ENCODE measurements at regions of chr2 and their contacts with region 1.

Region 1: DNA sequence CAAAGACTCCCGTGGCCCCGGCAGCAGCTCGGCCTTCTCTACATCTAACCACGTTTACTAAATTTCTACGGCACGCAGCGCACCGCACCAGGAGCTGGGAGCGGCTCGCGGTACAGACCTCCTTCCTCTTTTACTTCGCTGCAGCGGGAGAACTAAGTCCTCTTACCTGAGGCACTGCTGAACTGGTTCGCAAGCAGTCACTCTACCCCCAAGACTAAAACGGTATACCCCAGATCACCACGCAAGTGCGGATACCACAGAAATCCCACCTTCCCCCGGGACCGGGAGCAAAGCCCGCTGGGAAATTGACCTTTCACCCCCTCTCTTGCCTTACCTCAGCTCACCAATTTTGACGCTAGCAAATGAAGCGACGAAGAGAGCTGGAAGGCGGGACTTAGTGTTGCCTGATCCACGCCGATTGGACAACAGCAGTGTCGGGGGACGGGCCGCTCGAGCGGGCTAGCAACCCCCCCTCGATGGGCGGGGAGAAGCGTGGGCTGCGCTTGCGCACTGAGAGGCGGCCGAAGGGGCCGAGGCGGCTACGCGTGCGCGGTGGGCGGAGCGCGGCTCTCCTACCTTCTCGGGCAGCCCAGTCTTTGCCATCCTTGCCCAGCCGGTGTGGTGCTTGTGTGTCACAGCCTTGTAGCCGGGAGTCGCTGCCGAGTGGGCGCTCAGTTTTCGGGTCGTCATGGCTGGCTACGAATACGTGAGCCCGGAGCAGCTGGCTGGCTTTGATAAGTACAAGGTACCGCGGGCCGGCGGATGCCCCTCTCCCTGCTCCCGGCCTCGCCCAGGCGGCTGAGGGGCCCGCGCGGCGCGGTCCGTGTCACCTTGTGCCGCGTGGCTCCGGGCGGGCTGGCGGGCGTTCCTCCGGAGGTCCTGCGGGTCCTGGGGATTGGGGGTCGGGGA is at the start of gene SELENOI:
- DNase-seq: peak; percentile 100
- H3K4me3 Mint-ChIP-seq: peak within 1 kb of the TSS; percentile 99
- H3K27ac Mint-ChIP-seq: peak within 1 kb of the TSS; percentile 98
- H3K4me1 Mint-ChIP-seq: peaks cover 33% of the 10 kb centered on the region
- H3K27me3 Mint-ChIP-seq: no peaks in the 10 kb centered on the region
- total RNA-seq, gene SELENOI: 66.6 and 68.2 TPM in 2 replicates

Region 2: GRCh38 chr2:24771764-24772586 is 1573.8 kb before region 1 on chr2:
- intact Hi-C with region 1: no loop called
- DNase-seq: no peak
- H3K4me3 Mint-ChIP-seq: no peak overlapping the region
- H3K27ac Mint-ChIP-seq: no peak overlapping the region
- H3K4me1 Mint-ChIP-seq: peaks cover under 1% of the 10 kb centered on the region
- H3K27me3 Mint-ChIP-seq: peaks cover 4% of the 10 kb centered on the region

Region 3: DNA sequence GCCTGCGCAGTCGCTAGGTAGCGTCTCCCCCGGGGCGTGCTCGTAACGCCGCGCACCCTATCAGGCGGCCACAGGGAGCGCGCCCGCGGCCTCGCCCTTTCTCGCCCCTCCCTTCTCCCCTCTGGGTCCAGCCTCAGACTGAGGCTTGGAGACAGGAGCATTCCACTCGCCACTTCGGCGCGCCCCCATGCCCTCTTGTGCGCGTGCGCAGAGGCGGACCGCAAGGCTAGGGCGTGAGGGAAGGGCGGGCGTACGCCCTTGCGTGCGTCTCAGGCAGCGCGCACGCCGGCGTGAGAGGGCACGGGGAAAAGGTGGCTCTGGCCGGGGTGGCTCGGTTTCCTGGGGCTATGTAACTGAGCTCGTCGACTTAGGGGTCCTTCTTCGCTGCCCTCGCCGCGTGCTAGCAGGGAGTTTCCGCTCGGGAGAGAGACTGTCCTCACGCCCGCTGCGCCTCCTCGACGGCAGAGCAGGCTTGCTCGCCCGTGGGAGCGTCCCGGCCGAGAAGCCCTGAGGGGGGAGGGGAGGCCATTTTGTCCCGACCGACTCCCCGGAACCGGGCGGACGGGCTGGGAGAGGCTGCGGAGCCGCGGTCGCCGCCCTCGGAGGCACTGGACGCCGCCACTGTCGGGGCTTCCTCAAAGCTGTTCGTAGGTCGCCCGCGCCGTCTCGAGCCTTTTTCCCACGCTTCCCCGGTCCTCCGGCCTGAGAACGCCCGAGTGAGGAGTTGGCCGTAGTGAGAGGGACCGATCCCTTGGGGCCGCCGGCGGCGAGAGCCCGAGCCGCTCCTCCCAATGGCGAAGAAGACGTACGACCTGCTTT is 311.8 kb before region 1 on chr2 and contains the start of gene RAB10:
- intact Hi-C with region 1: loop called (anchors 1 kb)
- DNase-seq: peak; percentile 100
- H3K4me3 Mint-ChIP-seq: peak within 1 kb of the TSS; percentile 94
- H3K27ac Mint-ChIP-seq: peak within 1 kb of the TSS; percentile 93
- H3K4me1 Mint-ChIP-seq: peaks cover 26% of the 10 kb centered on the region
- H3K27me3 Mint-ChIP-seq: no peaks in the 10 kb centered on the region
- total RNA-seq, gene RAB10: 128 and 130 TPM in 2 replicates

Region 4: DNA sequence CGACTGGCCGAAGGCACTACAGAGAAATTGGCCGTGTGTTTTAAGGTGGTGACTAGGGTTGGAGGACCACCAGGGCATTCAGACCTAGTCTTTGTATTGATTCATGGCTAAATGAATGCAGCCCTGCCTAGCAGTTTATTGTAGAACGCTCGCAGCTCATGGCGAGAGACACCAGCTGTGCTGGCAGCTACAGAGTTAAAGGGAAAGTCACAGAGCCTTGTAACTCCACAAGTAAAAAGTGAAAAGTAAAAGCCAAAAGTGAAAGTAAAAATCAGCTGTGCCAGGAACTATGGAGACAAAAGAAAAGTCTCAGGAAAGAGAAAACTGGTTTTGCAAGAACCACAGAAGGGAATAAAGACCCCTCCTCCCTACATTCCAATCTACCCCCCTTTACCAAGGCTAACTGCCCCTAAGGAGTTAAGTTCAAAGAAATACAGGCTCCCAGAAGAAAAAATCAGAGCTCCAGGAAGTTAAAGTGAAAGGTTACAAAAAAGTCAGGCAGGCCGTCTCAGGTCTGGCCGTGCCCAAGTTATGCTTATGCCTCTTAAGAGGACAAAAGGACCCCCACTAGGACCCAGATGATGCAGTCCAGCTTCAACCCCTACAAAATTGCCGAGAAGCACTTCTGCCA is 46.2 kb before region 1 on chr2:
- intact Hi-C with region 1: no loop called
- DNase-seq: no peak
- H3K4me3 Mint-ChIP-seq: no peak overlapping the region
- H3K27ac Mint-ChIP-seq: no peak overlapping the region
- H3K4me1 Mint-ChIP-seq: no peaks in the 10 kb centered on the region
- H3K27me3 Mint-ChIP-seq: peaks cover 40% of the 10 kb centered on the region

Region 5: DNA sequence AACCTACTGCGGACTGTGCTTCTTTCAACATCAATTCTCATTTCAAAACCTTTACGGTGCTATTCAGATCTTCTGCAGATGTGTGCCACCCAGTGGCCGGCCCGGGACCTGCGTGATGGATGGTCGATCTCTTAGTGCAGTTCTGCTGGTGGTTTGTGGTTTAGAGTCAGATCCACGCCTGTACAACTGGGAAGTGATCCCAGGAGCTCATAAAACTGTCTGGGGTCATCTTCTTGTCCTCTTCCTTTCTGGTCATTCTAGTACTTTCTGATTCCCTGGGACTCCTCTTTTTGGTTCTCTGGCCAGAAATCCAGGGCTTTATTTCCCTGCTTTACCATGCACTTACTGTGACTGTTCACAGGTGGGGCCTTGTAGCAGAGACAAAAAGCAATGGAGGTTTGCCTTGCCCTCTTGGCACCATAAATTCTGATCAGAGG is 15.7 kb before region 1 on chr2:
- intact Hi-C with region 1: loop called (anchors 2 kb)
- DNase-seq: peak; percentile 70
- H3K4me3 Mint-ChIP-seq: no peak overlapping the region
- H3K27ac Mint-ChIP-seq: no peak overlapping the region
- H3K4me1 Mint-ChIP-seq: peaks cover 13% of the 10 kb centered on the region
- H3K27me3 Mint-ChIP-seq: no peaks in the 10 kb centered on the region

Region 6: DNA sequence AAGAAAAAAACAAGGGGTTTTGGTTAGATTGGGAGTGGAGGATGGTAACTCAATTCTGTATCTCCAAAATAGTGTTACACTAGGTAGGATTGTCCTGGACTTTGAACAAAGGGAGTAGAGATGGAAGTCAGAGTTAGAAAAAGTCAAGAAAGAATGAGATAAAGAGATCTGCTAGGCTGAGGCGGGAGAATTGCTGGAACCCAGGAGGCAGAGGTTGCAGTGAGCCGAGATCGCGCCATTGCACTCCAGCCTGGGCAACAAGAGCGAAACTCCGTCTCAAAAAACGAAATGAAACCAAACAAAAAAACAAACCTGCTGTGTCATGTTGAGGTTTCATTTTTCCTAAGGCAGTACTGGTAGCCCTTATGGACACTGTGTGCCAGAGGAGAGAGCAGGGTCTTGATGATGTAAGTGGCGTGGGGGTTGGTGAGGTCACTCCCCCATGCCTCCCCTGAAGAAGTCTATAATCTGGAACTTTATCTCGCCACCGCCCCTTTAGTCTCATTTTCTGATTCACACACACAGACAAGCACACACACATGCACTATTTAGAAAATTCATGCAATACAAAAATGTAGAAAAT is 66.4 kb after region 1 on chr2:
- intact Hi-C with region 1: loop called (anchors 1 kb)
- DNase-seq: peak; percentile 9
- H3K4me3 Mint-ChIP-seq: peak overlapping the region; percentile 72
- H3K27ac Mint-ChIP-seq: peak overlapping the region; percentile 46
- H3K4me1 Mint-ChIP-seq: peaks cover 11% of the 10 kb centered on the region
- H3K27me3 Mint-ChIP-seq: peaks cover 9% of the 10 kb centered on the region

Region 7: GRCh38 chr2:26503231-26503880 is 157.6 kb after region 1 on chr2:
- intact Hi-C with region 1: loop called (anchors 1 kb)
- DNase-seq: peak; percentile 83
- H3K4me3 Mint-ChIP-seq: peak overlapping the region; percentile 79
- H3K27ac Mint-ChIP-seq: peak overlapping the region; percentile 51
- H3K4me1 Mint-ChIP-seq: peaks cover 7% of the 10 kb centered on the region
- H3K27me3 Mint-ChIP-seq: peaks cover 5% of the 10 kb centered on the region

Region 8: DNA sequence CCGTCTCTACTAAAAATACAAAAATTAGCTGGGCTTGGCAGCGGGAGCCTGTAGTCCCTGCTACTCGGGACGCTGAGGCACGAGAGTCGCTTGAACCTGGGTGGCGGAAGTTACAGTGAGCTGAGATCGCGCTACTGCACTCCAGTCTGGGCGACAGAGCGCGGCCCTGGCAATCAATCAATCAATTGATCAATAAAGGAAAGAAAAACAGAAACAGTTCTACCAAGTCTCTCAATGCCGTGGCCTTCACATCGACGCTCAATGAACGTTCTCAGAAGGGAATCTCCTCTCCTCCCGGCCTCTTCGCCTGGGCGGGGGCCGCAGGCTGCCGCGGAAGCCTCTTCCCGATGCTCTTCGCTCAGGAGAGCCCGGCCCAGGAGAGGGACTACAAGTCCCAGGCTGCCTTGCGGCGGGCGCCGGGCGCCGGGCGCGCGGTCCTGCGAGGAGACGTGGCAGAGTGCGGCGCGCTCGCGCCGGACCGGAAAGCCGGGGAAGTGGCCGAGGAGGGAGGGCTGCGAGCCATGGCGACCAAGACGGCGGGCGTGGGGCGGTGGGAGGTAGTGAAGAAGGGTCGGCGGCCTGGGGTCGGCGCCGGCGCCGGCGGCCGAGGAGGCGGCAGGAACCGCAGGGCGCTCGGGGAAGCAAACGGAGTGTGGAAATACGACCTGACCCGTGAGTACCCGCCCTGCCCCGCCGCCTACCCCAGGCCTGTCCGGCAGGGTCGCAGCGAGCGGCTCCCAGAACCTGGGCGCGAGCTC is 686.9 kb after region 1 on chr2 and contains the start of gene TMEM214:
- intact Hi-C with region 1: loop called (anchors 5 kb)
- DNase-seq: peak; percentile 83
- H3K4me3 Mint-ChIP-seq: peak within 1 kb of the TSS; percentile 96
- H3K27ac Mint-ChIP-seq: peak within 1 kb of the TSS; percentile 90
- H3K4me1 Mint-ChIP-seq: peaks cover 46% of the 10 kb centered on the region
- H3K27me3 Mint-ChIP-seq: no peaks in the 10 kb centered on the region
- total RNA-seq, gene TMEM214: 97.5 and 98.1 TPM in 2 replicates

Region 9: DNA sequence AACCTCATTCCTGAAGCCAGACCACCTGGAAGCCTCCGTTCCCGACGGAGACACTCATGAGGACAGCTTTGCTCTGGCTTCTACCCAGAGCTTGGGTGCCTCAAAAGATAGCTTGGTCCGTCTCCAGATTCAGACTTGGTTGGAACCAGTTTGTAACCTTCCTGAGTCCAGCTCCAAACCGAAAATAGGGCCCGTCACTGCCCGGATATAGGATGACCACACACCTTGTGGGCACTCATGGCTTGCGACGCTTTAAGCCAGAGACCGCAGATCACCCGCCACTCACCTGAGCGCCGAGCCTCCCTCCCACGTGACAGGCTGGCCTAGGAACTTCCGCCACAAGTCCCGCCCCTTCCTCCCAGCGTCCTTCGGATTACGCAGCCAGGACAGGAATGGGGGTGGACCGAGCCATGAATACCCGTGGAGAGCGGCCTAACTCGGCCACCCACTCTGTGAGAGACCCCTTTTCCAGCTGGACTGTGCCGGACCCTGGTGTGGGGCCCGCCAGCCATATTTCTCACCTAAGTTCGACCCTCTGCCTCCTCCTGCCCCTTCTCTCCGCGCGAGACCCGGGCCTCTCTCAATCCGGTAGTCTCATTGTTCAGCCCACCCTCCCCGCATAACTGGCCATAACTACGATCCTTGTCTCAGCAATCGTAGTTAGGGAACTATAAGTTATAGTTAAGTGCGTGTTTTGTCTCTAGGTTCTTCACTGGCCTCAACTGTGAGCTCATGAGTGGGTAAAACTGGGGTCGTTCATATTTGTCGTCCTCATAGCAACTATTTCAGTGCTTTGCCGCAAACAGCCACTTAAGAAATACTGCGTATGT is 977.2 kb after region 1 on chr2 and contains the start of gene MPV17:
- intact Hi-C with region 1: loop called (anchors 5 kb)
- DNase-seq: peak; percentile 84
- H3K4me3 Mint-ChIP-seq: peak within 1 kb of the TSS; percentile 99
- H3K27ac Mint-ChIP-seq: peak within 1 kb of the TSS; percentile 88
- H3K4me1 Mint-ChIP-seq: peaks cover 32% of the 10 kb centered on the region
- H3K27me3 Mint-ChIP-seq: no peaks in the 10 kb centered on the region
- total RNA-seq, gene MPV17: 85.9 and 89.9 TPM in 2 replicates

Measured in activated T-helper 1 cell treated with anti-CD3 and anti-CD28 coated beads, Interleukin-12 subunit alpha, Interleukin-12 subunit beta, Interleukin-2, Interleukin-4 antibody, amounts not matched to agents 30 ng/mL and 10 ng/mL and 1 ng/mL, durations not matched to agents 14 hours and 24 hours and 36 hours (primary cell).